ENCODE measurements at regions of chr5 and their contacts with region 1.

Region 1: GRCh38 chr5:180233729-180234128 is 24.7 kb upstream of the RASGEF1C start:
- DNase-seq: peak; percentile 41

Region 2: GRCh38 chr5:180018347-180019060 is 215.2 kb before region 1 on chr5:
- intact Hi-C with region 1: no loop called
- DNase-seq: no peak

Region 3: GRCh38 chr5:180284149-180284548 is 50.4 kb after region 1 on chr5:
- intact Hi-C with region 1: no loop called
- DNase-seq: no peak

Region 4: GRCh38 chr5:180353048-180353979 is 119.6 kb after region 1 on chr5 and contains the start of gene GFPT2:
- intact Hi-C with region 1: no loop called
- DNase-seq: peak; percentile 94
- total RNA-seq, gene GFPT2: 75.4 to 83.3 TPM

Region 5: DNA sequence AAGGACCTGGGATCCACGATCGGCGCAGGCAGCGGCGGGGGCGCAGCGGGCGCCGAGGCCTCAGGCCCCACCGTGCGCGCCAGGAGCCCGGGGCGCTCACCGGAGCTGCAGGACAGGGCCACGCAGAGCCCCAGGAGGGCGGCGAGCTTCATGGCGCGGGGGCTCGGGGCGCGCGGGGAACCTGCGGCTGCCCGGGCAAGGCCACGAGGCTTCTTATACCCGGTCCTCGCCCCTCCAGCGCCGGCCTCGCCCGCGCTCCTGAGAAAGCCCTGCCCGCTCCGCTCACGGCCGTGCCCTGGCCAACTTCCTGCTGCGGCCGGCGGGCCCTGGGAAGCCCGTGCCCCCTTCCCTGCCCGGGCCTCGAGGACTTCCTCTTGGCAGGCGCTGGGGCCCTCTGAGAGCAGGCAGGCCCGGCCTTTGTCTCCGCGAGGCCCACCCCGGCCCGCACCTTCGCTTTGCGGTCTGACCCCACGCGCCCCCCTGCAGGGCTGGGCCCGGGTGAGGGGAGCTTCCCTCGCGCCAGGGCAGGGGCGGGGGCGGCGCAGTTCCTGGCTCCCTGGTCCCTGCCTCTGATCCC is 357.7 kb after region 1 on chr5 and contains the start of gene SCGB3A1:
- intact Hi-C with region 1: loop called in 1 of 2 experiments (anchors 5 kb)
- DNase-seq: peak; percentile 80
- total RNA-seq, gene SCGB3A1: not detected